ENCODE measurements at regions of chr7 and their contacts with region 1.

Region 1: GRCh38 chr7:25069900-25070443 is 55.1 kb downstream of the CYCS start:
- DNase-seq: peak in 3 of 5 donors; percentile 29 to 57 (median 49)
- ATAC-seq: peak in 3 of 4 donors; percentile 53 to 70 (median 56)
- H3K4me3 ChIP-seq: peak overlapping the region in 7 of 12 donors; percentile 12 to 47 (median 28)
- H3K27ac ChIP-seq: no peak overlapping the region
- H3K4me1 ChIP-seq: peaks cover 0 to 10% (median 0%) of the 10 kb centered on the region in 12 donors
- H3K27me3 ChIP-seq: no peaks in the 10 kb centered on the region
- CTCF ChIP-seq: peak; percentile 84 to 93 (median 90)
- POLR2A ChIP-seq: no peak

Region 2: DNA sequence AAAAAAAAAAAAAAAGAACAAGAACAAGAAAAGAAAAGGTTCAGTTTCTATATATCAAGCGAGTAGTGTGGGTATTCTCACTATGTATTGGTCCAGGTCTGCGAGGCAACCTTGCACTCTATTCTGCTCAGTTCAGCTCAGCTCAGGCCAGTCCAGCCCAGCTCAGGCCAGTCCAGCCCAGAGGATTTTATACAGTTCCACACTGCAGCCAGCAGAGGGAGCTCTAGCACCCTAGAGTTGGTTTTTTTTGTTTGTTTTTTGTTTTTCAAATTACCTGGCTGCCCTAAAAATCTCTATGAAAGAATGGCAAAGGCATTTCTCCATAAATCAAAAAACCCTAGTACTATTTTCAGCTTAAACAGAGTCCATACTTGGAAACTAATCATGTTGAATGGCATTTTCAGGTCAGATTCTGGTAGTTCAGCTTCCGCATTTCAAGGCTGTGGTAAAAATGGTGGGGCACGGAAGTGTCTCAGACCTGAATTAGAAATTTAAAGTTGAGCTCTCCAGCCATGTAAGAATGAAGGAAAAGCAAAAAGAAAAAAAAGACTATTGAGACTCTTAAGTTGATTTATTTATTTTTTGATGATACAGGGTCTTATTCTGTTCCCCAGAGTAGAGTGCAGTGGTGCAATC is 257.5 kb before region 1 on chr7:
- intact Hi-C with region 1: loop called in 4 of 10 experiments (anchors 2 to 5 kb)
- DNase-seq: peak in 3 of 5 donors; percentile 25 to 44 (median 36)
- ATAC-seq: peak in 3 of 4 donors; percentile 80 to 88 (median 86)
- H3K4me3 ChIP-seq: no peak overlapping the region
- H3K27ac ChIP-seq: no peak overlapping the region
- H3K4me1 ChIP-seq: no peaks in the 10 kb centered on the region
- H3K27me3 ChIP-seq: no peaks in the 10 kb centered on the region
- CTCF ChIP-seq: peak; percentile 83 to 93 (median 90)
- POLR2A ChIP-seq: no peak

Region 3: DNA sequence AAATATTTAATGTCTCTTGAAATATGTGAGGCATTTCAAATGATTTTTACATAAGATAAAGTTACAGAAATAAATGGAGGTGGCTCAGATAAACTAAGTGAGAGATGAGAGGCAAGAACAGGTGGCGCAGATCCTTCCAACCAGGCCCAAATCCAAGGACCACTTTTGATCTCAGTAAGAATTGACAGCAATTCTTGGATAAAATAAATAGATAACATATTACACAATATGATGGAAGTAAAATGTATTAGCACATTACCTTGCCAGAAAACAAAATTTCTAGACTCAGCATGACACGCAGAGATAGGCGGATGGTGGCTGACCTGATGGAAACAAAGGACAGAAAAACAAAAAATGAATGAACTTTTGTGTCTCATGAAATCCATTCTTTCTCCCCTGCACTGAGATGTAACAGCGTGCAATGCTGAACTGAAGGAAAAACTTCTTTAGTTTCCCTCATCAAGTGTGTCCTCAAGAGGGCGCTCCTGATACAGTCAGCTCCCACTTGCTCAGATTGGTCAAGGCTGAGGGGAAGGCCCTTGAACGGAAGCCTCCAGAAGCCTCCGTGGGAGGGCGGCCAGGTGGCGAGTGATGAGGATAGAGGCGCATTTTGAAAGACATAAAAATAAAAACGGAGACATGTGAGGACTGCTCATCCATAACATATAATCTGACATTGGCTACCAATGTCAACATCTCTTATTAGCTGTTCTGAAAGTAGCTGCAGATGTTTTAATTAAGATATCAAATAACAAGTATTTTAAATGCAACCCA is 249.9 kb before region 1 on chr7:
- intact Hi-C with region 1: loop called in 9 of 10 experiments (anchors 1 to 2 kb)
- DNase-seq: peak; percentile 73 to 88 (median 84)
- ATAC-seq: peak; percentile 75 to 93 (median 91)
- H3K4me3 ChIP-seq: no peak overlapping the region
- H3K27ac ChIP-seq: peak overlapping the region in 1 of 12 donors; percentile 74
- H3K4me1 ChIP-seq: peaks cover 0 to 22% (median 7%) of the 10 kb centered on the region in 12 donors
- H3K27me3 ChIP-seq: no peaks in the 10 kb centered on the region
- CTCF ChIP-seq: peak; percentile 78 to 95 (median 87)
- POLR2A ChIP-seq: no peak

Region 4: DNA sequence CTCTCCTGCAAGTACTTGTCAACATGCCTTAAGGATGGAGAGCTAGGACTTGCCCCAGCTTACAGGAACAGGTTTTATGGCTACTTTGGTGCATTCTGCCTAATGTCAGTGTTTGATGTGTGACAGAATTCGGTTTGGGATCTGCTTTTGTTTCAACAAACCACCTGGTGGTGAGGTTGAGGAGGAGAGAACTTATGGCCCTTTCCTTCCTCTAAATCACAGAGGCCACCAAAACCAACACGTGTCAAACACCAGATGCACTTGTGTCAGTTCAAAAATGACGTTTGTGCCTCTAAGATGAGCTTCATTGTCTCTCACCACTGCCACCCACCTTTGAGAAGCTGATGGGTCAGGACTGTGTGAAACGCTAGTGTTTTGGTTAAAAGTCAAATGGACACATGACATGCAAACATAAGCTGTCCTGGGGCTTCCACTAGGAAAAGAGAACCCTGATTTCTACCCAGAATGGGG is 173.9 kb before region 1 on chr7:
- intact Hi-C with region 1: loop called in 1 of 10 experiments (anchors 10 kb)
- DNase-seq: no peak
- ATAC-seq: no peak
- H3K4me3 ChIP-seq: no peak overlapping the region
- H3K27ac ChIP-seq: no peak overlapping the region
- H3K4me1 ChIP-seq: peaks cover 0 to 28% (median 0%) of the 10 kb centered on the region in 12 donors
- H3K27me3 ChIP-seq: no peaks in the 10 kb centered on the region
- CTCF ChIP-seq: no peak
- POLR2A ChIP-seq: no peak

Region 5: DNA sequence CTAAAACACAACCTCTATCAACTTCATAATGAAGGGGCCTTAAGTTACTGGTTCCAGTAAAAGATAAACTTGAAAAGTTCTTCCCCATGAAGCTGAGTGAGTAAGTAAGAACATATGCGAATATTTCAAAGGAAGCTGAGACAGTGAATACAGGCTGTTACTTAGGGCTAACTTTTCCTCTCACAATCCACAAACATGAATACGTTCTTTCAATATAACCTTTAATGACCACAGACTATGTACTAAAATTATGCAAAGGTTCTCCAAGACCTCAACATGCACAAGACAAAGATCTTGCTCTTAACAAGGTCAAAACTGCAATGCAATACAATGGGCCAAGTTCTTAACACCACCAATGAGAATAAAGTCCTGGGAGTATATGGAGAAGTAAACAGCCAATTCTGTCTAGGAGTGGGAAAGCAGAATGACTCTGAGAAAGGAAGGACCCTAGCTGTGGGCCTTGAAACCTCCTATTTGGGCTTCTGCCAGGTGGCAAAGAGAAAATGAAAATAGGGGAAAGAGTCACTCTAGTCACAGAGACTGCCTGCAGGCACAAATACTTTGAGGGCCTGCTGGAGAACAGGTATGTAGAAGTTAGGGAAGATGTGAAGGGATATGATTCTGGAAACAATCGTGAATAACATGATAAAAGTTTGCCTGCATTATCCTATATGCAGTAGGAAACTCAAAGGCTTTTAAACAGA is 133.7 kb before region 1 on chr7:
- intact Hi-C with region 1: no loop called
- DNase-seq: no peak
- ATAC-seq: no peak
- H3K4me3 ChIP-seq: no peak overlapping the region
- H3K27ac ChIP-seq: no peak overlapping the region
- H3K4me1 ChIP-seq: peaks cover 0 to 32% (median 1%) of the 10 kb centered on the region in 12 donors
- H3K27me3 ChIP-seq: no peaks in the 10 kb centered on the region
- CTCF ChIP-seq: no peak
- POLR2A ChIP-seq: no peak

Region 6: GRCh38 chr7:26398756-26399501 is 1329.0 kb after region 1 on chr7:
- intact Hi-C with region 1: no loop called
- DNase-seq: peak in 4 of 5 donors; percentile 28 to 72 (median 42)
- ATAC-seq: peak in 3 of 4 donors; percentile 64 to 70 (median 69)
- H3K4me3 ChIP-seq: peak overlapping the region; percentile 59 to 74 (median 64)
- H3K27ac ChIP-seq: peak overlapping the region in 11 of 12 donors; percentile 26 to 81 (median 66)
- H3K4me1 ChIP-seq: peaks cover 0 to 19% (median 10%) of the 10 kb centered on the region in 12 donors
- H3K27me3 ChIP-seq: peaks cover 0 to 15% (median 2%) of the 10 kb centered on the region in 9 donors
- CTCF ChIP-seq: peak in 6 of 12 donors; percentile 9 to 32 (median 21)
- POLR2A ChIP-seq: no peak